H1 (cell line): ENCODE measurements at regions of chr20 and their contacts with region 1.

Region 1: DNA sequence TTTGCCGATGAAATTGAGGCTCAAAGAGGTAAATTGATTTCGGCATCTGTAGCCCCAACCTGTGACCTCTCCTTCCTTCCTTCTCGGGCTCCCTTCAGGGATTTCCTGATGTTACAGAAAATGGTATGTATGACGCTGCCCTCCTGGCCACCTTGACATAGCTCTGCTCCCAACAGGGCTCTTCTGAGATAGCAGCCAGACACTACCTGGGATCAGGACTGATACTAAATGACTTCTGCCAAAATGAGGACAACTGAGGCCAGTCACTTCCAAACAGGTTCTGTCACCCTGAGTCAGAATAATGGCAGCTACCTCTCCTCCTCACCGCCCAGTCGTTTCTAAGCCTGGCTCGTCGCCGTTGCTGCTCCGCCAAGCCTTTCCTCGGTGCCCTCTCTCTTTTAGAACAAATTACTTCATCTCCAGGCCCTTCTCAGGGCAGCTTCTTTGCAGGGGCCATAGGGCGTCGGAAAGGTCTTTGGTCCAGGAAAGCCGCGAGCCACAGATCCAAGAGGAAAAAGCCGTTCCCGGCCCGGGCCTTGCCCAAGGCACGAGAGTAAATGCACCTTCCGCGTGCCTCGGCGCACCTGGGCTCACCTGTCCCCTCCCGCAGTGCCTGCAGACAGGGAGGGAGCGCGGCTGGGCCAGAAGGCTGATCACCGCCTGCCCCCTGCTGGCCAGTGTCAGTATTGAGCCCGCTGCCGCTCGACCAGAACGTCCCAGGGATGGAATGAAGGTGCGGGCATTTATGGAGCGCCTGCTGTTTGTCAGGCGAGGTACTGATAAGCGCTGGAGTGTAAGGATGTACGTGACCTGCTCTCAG is 904 bp upstream of the LPIN3 start:
- DNase-seq: peak; percentile 88 to 99
- H3K4me3 ChIP-seq: peak overlapping the region in 3 of 4 experiments; percentile 34 to 62 (median 48); a peak in 7 of 8 replicates
- H3K27ac ChIP-seq: no peak overlapping the region
- H3K4me1 ChIP-seq: peaks cover 3 to 13% (median 6%) of the 10 kb centered on the region in 4 experiments; a peak in 5 of 7 replicates
- H3K27me3 ChIP-seq: peaks cover 0 to 7% (median 2%) of the 10 kb centered on the region in 4 experiments; a peak in 1 of 7 replicates
- CTCF ChIP-seq: peak; percentile 97 to 98 (median 97)
- EP300 ChIP-seq: no peak
- POLR2A ChIP-seq: no peak
- RAD21 ChIP-seq: peak; percentile 99

Region 2: DNA sequence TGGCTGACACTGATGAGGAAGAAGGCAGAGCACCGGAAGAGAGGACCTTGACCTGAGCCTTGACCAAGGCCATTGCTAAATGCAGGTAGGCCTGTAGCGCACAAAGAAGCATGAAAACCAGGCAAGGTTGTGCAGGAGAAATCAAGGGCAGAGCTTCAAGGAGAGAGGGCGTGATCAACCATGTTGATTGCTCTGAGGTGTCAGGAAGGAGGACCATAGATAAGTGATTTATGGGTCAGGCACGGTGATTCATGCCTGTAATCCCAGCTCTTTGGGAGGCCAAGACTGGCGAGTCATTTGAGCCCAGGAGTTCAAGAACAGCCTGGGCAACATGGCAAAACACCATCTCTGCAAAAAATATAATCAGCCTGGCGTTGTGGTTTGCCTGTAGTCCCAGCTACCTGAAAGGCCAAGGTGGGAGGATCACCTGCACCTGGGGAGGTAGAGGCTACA is 190.0 kb before region 1 on chr20:
- CTCF ChIA-PET with region 1: interaction called, 12 read pairs
- POLR2A ChIA-PET with region 1: interaction called, 3 read pairs
- DNase-seq: no peak
- H3K4me3 ChIP-seq: no peak overlapping the region
- H3K27ac ChIP-seq: no peak overlapping the region
- H3K4me1 ChIP-seq: peaks cover 0 to 14% (median 7%) of the 10 kb centered on the region in 4 experiments; a peak in 3 of 7 replicates
- H3K27me3 ChIP-seq: no peaks in the 10 kb centered on the region
- CTCF ChIP-seq: no peak
- EP300 ChIP-seq: no peak
- POLR2A ChIP-seq: no peak
- RAD21 ChIP-seq: no peak

Region 3: DNA sequence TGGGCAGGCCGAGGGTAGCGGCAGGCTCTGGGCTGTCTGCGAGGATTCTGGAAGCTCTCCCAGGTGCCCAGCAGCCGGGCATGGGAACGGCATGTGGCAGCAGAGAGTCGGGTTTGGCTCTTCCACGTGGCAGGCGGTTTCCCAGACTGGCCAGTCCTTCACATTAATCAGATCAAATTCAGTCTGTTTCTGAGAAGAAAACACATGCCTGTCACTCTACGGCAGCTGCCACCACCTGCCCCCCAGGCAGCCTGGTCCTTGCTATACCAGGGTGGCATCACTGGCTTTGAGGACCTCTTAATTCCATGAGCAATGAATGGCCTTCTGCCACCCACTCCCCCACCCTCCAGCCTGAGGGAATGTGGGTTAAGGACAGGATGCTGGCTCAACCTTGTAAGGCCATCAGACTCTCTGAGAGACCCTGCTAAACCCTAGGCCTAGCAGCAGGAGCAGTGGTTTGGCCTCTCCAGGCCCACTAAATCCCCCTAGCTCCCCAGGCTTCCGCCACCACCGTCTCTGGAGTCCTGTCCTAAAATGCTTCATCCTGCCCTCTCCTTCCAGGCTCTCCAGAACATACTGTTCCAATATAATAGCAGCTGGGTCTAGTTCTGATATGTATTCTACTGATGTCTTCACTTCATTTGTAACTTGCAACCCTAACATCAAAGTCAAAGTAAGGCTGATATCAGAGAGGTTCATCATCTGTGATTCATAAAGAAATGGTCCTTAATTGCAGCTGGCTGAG is 154.5 kb before region 1 on chr20:
- CTCF ChIA-PET with region 1: interaction called, 25 read pairs
- POLR2A ChIA-PET with region 1: interaction called, 3 read pairs
- DNase-seq: peak in 1 of 2 experiments; percentile 39
- H3K4me3 ChIP-seq: no peak overlapping the region
- H3K27ac ChIP-seq: no peak overlapping the region
- H3K4me1 ChIP-seq: no peaks in the 10 kb centered on the region
- H3K27me3 ChIP-seq: no peaks in the 10 kb centered on the region
- CTCF ChIP-seq: no peak
- EP300 ChIP-seq: no peak
- POLR2A ChIP-seq: no peak
- RAD21 ChIP-seq: no peak

Region 4: DNA sequence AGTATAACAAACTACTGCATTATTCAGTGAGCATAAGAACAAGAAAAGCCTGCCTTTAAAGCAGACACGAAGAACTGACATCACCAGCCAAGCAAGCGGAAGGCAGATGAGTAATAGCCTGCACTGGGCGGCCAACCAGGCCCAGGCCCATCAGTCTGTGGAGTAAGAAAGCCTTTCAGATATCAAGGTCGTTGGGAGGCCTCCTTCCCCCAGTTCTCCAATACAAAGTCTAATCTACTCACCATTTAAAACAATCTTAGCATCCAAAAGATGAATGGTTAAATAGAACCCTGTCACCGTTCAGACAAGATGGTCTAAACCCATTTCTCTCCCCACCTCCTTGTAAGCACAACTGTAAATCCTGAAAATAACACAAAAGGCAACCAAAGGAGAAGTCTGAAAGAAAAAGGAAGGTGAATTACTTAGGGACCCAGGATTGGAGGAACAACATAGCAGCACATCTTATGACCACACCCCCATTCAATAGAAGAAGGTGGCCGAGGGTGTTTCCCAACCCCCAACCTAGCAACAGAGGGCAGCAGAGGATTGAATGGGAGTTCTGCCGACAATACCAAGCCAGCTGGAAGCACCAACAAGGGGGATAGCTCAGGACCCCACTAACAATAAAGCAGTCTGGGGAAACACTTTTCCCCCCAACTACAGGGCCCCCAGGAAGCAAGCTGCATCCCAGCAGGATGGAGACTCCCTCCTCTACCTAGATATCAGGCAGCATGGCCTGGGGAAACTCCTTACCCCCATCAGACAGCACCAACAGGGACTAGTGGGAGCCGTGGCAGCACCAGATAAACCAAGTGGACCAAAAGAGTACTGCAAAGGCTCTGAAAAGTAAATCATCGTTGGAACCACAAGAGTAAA is 90.1 kb before region 1 on chr20:
- CTCF ChIA-PET with region 1: interaction called, 70 read pairs
- POLR2A ChIA-PET with region 1: interaction called, 3 read pairs
- DNase-seq: peak; percentile 56 to 78
- H3K4me3 ChIP-seq: no peak overlapping the region; a peak in 2 of 8 replicates
- H3K27ac ChIP-seq: no peak overlapping the region
- H3K4me1 ChIP-seq: peaks cover 0 to 4% (median 3%) of the 10 kb centered on the region in 4 experiments; a peak in 6 of 7 replicates
- H3K27me3 ChIP-seq: peaks cover 0 to 10% (median 6%) of the 10 kb centered on the region in 4 experiments; a peak in 5 of 7 replicates
- CTCF ChIP-seq: peak; percentile 55 to 86 (median 61)
- EP300 ChIP-seq: no peak
- POLR2A ChIP-seq: no peak
- RAD21 ChIP-seq: peak; percentile 79 to 84

Region 5: DNA sequence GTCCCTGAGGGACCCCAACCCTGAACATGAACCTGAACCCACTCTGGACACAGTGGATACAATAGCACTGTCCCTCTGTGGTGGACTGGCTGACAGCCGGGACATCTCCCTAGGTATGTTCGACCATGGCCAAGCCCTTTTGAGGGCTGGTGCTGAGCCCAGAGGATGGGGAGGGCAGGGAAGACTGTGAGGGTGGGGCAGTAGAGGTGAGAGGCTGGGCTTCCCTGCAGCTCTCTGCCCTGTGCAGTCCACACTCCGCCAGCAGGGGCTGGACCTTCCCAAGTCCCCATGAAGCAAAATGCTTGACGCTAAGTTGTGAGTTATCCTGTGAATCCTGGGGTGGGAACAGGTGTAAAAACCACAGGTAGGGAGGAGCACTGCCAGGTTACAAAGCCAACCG is 12.4 kb after region 1 on chr20:
- CTCF ChIA-PET with region 1: interaction called, 23 read pairs
- POLR2A ChIA-PET with region 1: no interaction called
- DNase-seq: no peak
- H3K4me3 ChIP-seq: no peak overlapping the region
- H3K27ac ChIP-seq: no peak overlapping the region
- H3K4me1 ChIP-seq: no peaks in the 10 kb centered on the region; a peak in 1 of 7 replicates
- H3K27me3 ChIP-seq: no peaks in the 10 kb centered on the region
- CTCF ChIP-seq: peak; percentile 36 to 60 (median 53); a peak in 3 of 4 replicates
- EP300 ChIP-seq: no peak
- POLR2A ChIP-seq: no peak
- RAD21 ChIP-seq: peak in 1 of 2 experiments; percentile 33; a peak in 1 of 4 replicates

Region 6: DNA sequence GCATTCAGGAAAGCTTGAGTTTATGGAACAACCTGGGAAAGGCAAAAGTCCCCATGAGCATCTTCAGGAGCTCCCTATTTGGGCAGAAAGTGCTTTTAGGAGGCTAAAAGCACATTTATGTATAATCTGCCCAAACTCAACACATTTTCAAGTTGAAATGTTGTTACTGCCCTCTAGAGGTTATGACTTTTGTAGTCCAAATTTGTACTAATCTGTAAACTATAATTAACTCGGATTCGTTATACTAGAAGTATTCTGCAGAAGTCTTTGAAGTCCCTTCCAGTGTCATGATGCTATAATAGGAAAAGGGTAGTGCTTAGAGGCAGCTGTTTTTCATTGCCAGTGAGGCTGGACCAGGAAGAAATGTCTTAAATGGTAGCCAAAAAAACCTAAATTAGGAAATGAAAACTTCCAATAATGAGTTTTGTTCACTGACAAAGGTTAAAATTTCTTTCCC is 71.7 kb after region 1 on chr20:
- CTCF ChIA-PET with region 1: interaction called, 29 read pairs
- POLR2A ChIA-PET with region 1: no interaction called
- DNase-seq: no peak
- H3K4me3 ChIP-seq: no peak overlapping the region
- H3K27ac ChIP-seq: no peak overlapping the region
- H3K4me1 ChIP-seq: no peaks in the 10 kb centered on the region
- H3K27me3 ChIP-seq: no peaks in the 10 kb centered on the region
- CTCF ChIP-seq: peak in 1 of 3 experiments; percentile 19; a peak in 2 of 4 replicates
- EP300 ChIP-seq: no peak
- POLR2A ChIP-seq: no peak
- RAD21 ChIP-seq: no peak; a peak in 2 of 4 replicates